HEK293T (cell line): ENCODE measurements at regions of chr19 and their contacts with region 1.

Region 1: GRCh38 chr19:58558623-58559274 is 338 bp upstream of the UBE2M start:
- DNase-seq: peak; percentile 94

Region 2: DNA sequence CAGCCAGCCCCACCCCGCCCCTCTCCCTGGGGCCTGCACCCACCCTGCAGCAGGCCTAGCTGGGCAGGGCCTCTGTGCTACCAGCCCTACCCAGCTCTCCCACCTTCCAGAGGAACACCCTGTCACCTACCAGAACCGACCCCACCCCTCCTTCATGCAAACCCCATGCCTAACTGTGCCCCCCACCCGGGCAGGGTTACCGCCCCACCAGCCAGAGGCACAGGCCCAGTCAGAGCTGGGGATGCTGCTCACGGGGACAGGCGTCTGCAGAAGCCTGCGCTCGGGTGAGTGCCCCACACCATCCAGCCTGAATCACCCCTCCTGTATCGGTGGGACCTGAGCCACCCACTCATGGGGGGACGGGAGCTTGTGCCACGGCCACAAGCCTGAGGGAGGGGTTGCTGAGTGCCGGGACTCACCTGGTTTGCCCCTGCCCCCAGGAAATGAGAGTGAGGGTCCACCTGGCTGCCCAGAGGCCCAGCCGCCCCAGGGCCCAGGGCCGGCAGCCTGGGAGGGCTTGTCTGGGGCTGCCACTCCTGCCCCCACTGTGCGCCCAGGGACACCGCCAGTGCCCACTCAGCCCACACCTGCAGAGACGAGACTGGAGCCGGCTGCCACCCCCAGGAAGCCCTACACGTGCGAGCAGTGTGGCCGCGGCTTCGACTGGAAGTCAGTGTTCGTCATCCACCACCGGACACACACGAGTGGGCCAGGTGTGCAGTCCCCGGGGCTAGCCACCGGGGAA is 78.8 kb before region 1 on chr19:
- CTCF ChIA-PET with region 1: no interaction called
- POLR2A ChIA-PET with region 1: no interaction called
- DNase-seq: no peak

Region 3: DNA sequence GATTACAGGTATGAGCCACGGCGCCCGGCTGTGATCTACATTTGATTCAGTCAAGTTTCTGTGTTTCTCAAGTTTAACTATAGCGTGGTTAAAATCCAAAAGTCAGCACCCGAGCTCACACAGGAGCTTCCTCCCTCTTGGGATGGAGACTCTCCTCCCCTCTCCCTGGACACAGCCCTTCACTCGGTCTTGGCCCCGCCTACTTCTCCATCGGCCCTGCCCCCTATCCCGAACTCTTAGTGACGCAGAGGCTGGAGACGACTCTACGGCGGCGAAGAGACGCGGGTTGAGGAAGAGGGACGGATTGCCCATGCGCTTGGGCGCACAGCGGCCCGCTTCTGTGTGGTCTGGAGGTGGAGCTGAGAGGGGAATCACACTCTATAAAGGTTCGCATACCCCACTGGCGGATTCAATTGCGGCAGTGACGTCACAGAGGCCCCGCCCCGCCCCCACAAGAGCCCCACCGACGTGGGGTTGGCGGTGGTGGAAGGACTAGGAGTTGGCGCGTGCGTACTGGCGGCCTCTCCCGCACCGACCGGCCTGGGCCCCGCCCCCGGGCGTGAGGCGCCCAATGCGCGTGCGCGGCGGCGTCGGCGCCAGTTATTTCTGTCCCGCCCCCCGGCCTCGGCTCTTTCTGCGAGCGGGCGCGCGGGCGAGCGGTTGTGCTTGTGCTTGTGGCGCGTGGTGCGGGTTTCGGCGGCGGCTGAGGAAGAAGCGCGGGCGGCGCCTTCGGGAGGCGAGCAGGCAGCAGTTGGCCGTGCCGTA is 14.7 kb before region 1 on chr19 and contains the start of gene TRIM28:
- CTCF ChIA-PET with region 1: no interaction called
- POLR2A ChIA-PET with region 1: interaction called, 66 read pairs
- DNase-seq: peak; percentile 99

Region 4: GRCh38 chr19:58572818-58573657 is 14.3 kb after region 1 on chr19 and contains the start of gene MZF1:
- CTCF ChIA-PET with region 1: no interaction called
- POLR2A ChIA-PET with region 1: interaction called, 43 read pairs
- DNase-seq: peak; percentile 95

Region 5: DNA sequence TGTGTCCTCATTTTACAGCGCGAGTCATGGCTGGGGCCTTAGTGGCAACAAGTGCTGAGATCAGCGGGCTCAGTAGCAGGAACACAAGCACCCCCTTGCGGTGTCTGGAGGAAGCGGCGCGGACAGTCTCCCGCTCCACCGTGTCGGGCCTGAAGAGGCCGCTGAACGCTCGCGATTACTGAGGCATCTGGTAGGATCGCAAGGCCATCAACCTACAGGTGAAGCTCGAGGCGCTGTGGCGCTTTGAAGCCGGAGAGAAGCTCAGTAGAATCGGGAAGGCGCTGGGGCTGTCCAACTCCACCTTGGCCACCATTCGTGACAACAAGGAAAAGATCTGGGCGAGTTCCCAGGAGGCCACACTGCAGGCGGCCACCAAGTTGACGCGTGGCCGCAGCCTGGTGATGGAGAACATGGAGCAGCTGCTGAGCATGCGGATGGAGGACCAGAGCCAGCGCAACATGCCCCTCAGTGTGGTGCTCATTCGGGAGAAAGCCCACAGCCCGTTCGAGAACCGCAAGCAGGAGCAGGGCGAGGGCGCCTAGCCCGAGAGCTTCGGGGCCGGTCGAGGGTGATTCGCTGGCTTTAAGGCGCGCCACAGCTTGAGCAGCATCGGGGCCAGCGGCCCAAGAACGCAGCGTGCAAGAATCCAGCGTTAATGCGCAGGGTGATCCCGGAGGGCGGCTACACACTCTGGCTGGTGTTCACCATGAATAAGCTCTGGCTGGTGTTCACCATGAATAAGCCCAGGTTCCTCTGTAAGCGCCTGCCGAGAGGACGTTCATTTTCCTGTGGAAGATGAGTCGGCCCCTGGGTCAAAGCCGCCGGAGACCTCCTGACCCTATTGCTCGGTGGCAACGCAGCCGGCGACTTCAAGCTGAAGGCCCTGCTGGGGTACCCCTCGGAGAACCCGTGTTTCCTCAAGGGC is 22.7 kb after region 1 on chr19:
- CTCF ChIA-PET with region 1: interaction called, 4 read pairs
- POLR2A ChIA-PET with region 1: interaction called, 20 read pairs
- DNase-seq: peak; percentile 85